Heart left ventricle (tissue), 16 donors: ENCODE measurements at regions of chr18 and their contacts with region 1.

Region 1: DNA sequence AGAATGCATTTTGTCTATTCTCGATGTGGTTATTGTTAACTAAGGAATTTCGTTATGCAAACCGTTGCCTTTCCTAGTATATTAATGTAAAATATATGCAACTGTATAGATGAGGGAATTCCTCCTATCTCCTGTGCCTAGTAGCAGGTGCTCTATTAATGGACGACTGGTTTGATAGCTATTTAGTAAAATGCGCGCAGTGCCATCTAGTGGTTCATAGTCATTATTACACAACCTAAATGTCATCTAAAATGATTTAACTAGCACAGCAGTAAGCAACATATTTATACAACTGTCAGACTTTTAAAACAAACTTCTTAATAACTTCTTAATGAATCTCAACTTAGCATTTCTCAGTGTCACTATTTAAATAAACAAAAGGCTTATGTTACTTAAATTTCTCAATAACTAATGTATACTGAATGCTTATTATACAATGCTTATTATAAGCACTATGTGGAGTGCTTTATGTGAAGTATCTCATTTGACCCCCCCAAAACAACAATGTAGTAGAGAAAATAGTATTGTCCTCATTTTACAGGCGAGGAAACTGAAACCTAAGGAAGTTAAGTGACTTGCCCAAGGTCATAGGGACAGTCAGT is 77.9 kb downstream of the DTNA start:
- DNase-seq: peak in 2 of 5 donors; percentile 20 to 32
- ATAC-seq: peak in 3 of 4 donors; percentile 68 to 69 (median 68)
- H3K4me3 ChIP-seq: no peak overlapping the region
- H3K27ac ChIP-seq: no peak overlapping the region
- H3K4me1 ChIP-seq: peaks cover 0 to 5% (median 0%) of the 10 kb centered on the region in 12 donors
- H3K27me3 ChIP-seq: no peaks in the 10 kb centered on the region
- CTCF ChIP-seq: peak; percentile 60 to 87 (median 78)
- POLR2A ChIP-seq: no peak

Region 2: DNA sequence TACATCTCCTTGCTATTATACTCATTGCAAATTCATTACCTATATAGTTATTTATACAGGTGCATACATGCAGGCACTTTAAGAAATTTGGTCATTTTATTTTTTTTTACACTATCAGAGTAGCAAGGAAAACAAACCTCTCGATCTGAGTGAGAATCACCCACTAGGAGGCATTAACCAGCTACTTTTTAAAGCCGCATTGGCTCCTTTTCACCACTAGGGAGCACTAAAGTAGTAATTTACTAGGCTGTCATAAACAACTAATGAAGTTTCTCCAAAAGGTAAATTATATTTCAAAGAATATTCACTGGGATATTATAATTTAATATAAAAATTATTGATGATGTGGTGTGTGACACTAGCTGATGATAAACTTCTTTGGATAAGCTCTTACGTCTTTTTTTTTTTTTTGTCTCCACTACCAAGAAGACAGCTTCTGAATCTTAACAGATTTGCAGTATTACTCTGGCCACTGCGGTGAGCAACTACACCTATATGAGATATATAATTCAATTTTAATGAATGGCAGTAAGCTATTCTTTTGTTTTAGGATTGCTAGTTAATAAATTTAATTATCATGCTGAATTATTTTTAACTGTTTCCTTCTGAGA is 665.2 kb before region 1 on chr18:
- intact Hi-C with region 1: loop called in 8 of 10 experiments (anchors 5 to 10 kb)
- DNase-seq: peak in 2 of 5 donors; percentile 8 to 13
- ATAC-seq: peak in 1 of 4 donors; percentile 65
- H3K4me3 ChIP-seq: no peak overlapping the region
- H3K27ac ChIP-seq: no peak overlapping the region
- H3K4me1 ChIP-seq: no peaks in the 10 kb centered on the region
- H3K27me3 ChIP-seq: no peaks in the 10 kb centered on the region
- CTCF ChIP-seq: peak; percentile 68 to 92 (median 81)
- POLR2A ChIP-seq: no peak

Region 3: GRCh38 chr18:34342960-34343359 is 445.1 kb before region 1 on chr18:
- intact Hi-C with region 1: loop called in 1 of 10 experiments (anchors 10 kb)
- DNase-seq: no peak
- ATAC-seq: no peak
- H3K4me3 ChIP-seq: no peak overlapping the region
- H3K27ac ChIP-seq: no peak overlapping the region
- H3K4me1 ChIP-seq: no peaks in the 10 kb centered on the region
- H3K27me3 ChIP-seq: no peaks in the 10 kb centered on the region
- CTCF ChIP-seq: no peak
- POLR2A ChIP-seq: no peak

Region 4: GRCh38 chr18:34358923-34359322 is 429.1 kb before region 1 on chr18:
- intact Hi-C with region 1: loop called in 8 of 10 experiments (anchors 5 to 10 kb)
- DNase-seq: no peak
- ATAC-seq: peak in 2 of 4 donors; percentile 39 to 56
- H3K4me3 ChIP-seq: no peak overlapping the region
- H3K27ac ChIP-seq: no peak overlapping the region
- H3K4me1 ChIP-seq: peaks cover 0 to 3% (median 0%) of the 10 kb centered on the region in 12 donors
- H3K27me3 ChIP-seq: no peaks in the 10 kb centered on the region
- CTCF ChIP-seq: no peak
- POLR2A ChIP-seq: no peak

Region 5: DNA sequence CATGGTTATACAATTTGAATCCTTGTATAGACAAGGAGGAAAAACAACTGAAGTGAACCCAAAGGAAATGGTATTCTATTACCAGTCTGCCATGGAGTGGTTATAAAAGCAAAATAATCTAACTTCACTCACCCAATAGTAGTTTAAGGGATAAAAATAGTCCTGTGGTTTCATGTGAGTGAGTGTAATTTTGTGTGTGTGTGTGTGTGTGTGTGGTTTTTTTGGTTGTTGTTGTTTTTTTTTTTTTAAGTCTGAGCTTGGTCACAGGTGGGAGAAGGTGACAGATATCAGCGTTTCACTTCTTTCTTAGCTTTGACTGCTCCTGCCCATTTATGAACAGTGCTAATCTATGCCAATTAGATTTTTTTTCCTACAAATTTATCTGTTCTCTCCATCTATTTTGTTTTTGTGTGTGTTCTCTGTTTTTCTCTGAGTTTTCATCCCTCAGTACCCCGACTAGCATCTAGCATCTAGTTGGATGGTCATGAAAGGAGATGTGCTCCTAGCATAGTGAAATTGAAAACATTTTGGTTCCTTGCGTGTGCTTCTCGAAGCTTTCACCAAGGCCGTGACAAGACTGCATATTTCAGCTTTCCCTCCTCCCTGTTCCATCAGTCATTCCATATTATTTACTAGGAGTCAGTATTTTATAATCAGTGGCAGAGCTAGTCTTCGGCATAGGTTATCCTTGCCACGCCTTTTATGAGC is 278.0 kb before region 1 on chr18:
- intact Hi-C with region 1: loop called in 1 of 10 experiments (anchors 10 kb)
- DNase-seq: no peak
- ATAC-seq: peak in 1 of 4 donors; percentile 55
- H3K4me3 ChIP-seq: no peak overlapping the region
- H3K27ac ChIP-seq: peak overlapping the region in 6 of 12 donors; percentile 20 to 62 (median 43)
- H3K4me1 ChIP-seq: peaks cover 0 to 32% (median 10%) of the 10 kb centered on the region in 12 donors
- H3K27me3 ChIP-seq: no peaks in the 10 kb centered on the region
- CTCF ChIP-seq: no peak
- POLR2A ChIP-seq: no peak

Region 6: DNA sequence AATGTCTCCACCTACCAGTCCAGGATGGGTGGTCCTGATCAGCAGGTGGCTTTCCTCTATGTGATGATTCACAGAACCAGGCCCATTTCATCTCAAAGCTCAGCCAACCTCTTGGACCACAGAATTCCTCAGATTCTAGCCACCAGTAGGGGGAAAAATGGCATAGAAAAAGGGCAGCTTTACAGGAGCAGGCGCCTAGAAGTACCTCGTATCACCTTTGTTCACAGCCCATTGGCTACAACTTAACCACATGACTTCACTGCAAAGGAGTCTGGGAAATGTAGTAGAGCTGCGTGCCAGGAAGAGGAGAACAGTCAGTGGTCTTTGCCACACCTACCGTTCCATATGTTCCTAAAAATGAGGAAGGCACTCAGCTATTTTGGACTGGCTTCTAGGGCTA is 140.8 kb before region 1 on chr18:
- intact Hi-C with region 1: loop called in 2 of 10 experiments (anchors 5 to 10 kb)
- DNase-seq: no peak
- ATAC-seq: no peak
- H3K4me3 ChIP-seq: no peak overlapping the region
- H3K27ac ChIP-seq: no peak overlapping the region
- H3K4me1 ChIP-seq: peaks cover 0 to 31% (median 18%) of the 10 kb centered on the region in 12 donors
- H3K27me3 ChIP-seq: no peaks in the 10 kb centered on the region
- CTCF ChIP-seq: no peak
- POLR2A ChIP-seq: no peak

Region 7: DNA sequence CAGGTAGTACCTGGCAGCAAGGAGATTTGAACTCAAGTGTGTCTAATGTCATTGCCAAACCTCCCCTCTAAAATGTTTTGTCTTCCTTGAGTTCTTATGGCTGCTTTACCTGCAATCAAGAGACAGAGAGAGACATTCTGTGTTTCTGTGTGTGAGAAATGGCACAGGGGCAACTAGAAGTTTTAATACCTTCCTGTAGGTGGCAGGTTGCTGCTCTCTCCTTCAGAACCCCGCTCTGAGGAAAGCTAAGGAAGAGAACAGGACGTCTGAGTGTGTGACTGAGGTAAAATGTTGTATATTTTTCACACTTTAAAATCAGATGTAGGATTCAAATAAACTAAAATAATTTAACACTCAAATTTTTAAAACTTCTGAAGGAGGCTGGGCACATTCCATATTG is 58.8 kb before region 1 on chr18:
- intact Hi-C with region 1: loop called in 1 of 10 experiments (anchors 10 kb)
- DNase-seq: no peak
- ATAC-seq: peak; percentile 41 to 68 (median 60)
- H3K4me3 ChIP-seq: no peak overlapping the region
- H3K27ac ChIP-seq: peak overlapping the region in 11 of 12 donors; percentile 20 to 86 (median 69)
- H3K4me1 ChIP-seq: peaks cover 0 to 33% (median 12%) of the 10 kb centered on the region in 12 donors
- H3K27me3 ChIP-seq: no peaks in the 10 kb centered on the region
- CTCF ChIP-seq: peak in 10 of 12 donors; percentile 17 to 53 (median 45)
- POLR2A ChIP-seq: no peak